Psoas muscle (tissue), 8 donors: ENCODE measurements at regions of chrX and their contacts with region 1.

Region 1: GRCh38 chrX:112784692-112785091 is 55.9 kb downstream of the AMOT start:
- DNase-seq: no peak
- ATAC-seq: peak in 3 of 4 donors; percentile 50 to 82 (median 56)
- H3K4me3 ChIP-seq: no peak overlapping the region
- H3K27ac ChIP-seq: no peak overlapping the region
- H3K4me1 ChIP-seq: peaks cover 4% of the 10 kb centered on the region
- H3K27me3 ChIP-seq: peaks cover 0 to 4% (median 0%) of the 10 kb centered on the region in 3 donors
- CTCF ChIP-seq: no peak

Region 2: GRCh38 chrX:111600341-111600740 is 1184.4 kb before region 1 on chrX:
- intact Hi-C with region 1: loop called in 1 of 2 experiments (anchors 5 kb)
- DNase-seq: no peak
- ATAC-seq: no peak
- H3K4me3 ChIP-seq: no peak overlapping the region
- H3K27ac ChIP-seq: no peak overlapping the region
- H3K4me1 ChIP-seq: no peaks in the 10 kb centered on the region
- H3K27me3 ChIP-seq: no peaks in the 10 kb centered on the region
- CTCF ChIP-seq: no peak